ENCODE measurements at regions of chr15 and their contacts with region 1.

Region 1: DNA sequence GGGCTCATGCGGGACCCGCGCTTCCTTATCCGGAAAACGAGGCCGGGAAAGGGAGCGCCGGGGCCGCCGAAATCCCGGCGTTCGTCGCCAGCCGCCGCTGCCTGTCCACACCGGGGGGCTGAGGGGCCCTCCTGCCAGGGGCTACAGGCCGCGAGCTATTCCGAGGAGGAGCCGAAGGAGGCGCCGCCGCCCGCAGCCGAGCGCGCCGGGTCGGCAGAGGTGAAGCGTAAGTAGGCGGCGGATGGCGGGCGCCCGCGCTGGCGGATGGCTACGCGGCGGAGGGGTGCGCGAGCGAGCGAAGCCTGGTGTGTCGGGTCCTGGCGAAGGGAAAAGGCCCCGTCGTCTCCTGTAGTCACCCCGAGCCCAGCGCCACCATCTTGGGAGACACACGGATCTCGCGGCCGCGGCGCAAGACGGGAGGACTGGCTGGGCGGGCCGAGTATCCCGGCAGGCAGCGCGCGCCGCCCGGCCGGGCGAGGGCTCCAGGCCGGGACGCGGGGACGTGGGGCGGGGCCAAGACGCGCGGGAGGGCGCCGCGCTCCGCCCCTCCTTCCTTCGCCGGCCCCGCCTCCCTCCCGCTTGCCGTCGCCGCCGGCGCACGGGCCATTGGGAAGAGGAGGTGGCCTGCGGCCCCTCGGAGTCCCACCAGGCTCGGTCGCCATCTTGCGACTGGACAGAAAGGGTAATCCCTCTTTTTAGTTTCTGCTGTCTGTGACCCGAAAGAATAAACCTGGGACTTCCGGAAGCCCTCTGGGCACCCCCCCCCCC is at the start of gene UBE3A:
- DNase-seq: peak; percentile 89
- H3K4me3 Mint-ChIP-seq: peak within 1 kb of the TSS; percentile 88
- H3K27ac Mint-ChIP-seq: peak within 1 kb of the TSS; percentile 91
- H3K4me1 Mint-ChIP-seq: peaks cover 29% of the 10 kb centered on the region
- H3K27me3 Mint-ChIP-seq: no peaks in the 10 kb centered on the region
- total RNA-seq, gene UBE3A: 85.7 to 92.3 TPM

Region 2: DNA sequence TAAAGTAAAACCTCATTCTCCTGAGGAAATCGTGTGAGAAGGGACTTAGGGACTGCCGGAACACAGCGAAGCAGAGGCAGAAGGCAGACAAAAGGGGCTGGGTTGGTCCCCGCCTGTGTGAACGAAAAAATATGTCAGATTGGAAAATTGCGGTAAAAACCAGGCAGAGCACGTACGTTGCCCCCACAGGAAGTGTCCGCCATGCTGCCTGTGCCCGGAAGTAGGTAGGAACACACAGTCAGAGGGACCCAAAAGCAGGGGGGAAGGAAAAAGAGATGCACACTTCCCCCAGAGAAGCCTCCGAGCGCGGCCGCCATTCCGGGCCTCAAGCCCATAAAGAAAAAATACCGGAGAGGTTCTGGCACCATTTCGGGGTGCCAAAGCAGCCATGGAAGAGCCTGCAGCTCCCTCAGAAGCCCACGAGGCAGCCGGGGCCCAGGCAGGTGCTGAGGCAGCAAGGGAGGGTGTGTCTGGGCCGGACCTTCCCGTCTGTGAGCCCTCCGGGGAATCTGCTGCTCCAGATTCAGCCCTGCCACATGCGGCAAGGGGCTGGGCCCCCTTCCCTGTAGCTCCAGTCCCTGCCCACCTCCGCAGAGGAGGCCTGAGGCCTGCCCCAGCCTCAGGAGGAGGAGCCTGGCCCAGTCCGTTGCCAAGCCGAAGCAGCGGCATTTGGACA is 1873.3 kb before region 1 on chr15 and contains the start of gene MKRN3:
- CTCF ChIA-PET with region 1: no interaction called
- intact Hi-C with region 1: loop called (anchors 5 kb)
- DNase-seq: peak; percentile 67
- H3K4me3 Mint-ChIP-seq: peak within 1 kb of the TSS; percentile 79
- H3K27ac Mint-ChIP-seq: peak within 1 kb of the TSS; percentile 92
- H3K4me1 Mint-ChIP-seq: peaks cover 6% of the 10 kb centered on the region
- H3K27me3 Mint-ChIP-seq: peaks cover 13% of the 10 kb centered on the region
- total RNA-seq, gene MKRN3: 2.5 to 3.2 TPM

Region 3: DNA sequence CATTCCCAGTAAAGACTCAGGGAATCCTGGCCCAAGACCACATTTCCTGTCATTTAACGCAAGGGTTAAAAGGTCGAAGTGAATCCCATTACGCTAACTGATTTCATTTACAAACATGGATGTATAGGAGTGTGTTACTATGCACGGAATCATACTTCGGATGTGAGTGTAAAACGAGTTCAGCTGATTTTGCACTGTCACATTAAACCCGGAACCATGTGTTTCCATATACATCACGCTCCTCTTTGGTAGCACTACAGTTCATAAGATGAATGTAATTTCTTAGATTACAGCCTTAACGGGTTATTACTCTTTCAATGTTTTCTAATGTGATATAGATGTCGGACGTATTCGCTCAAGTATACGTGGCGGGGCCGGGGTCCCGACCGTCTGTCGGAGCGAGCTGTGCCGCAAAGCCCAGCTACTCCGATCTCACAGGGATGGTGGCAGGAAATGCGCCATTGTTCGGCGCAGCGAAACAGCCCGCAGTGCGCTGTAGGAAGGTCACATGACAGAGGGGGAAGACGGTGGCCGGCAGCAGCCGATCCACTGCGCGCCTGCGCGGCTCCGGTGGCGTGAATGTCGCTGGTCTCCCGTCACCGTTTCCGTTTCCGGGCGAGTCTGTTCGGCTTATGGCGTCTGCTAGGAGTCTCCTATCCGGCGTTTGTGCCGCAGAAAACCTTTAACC is 666.0 kb before region 1 on chr15:
- CTCF ChIA-PET with region 1: no interaction called
- intact Hi-C with region 1: loop called (anchors 1 kb)
- DNase-seq: peak; percentile 80
- H3K4me3 Mint-ChIP-seq: peak overlapping the region; percentile 79
- H3K27ac Mint-ChIP-seq: peak overlapping the region; percentile 53
- H3K4me1 Mint-ChIP-seq: peaks cover 2% of the 10 kb centered on the region
- H3K27me3 Mint-ChIP-seq: peaks cover 3% of the 10 kb centered on the region

Region 4: GRCh38 chr15:25368850-25369249 is 69.9 kb before region 1 on chr15:
- CTCF ChIA-PET with region 1: no interaction called
- intact Hi-C with region 1: loop called (anchors 5 kb)
- DNase-seq: no peak
- H3K4me3 Mint-ChIP-seq: no peak overlapping the region
- H3K27ac Mint-ChIP-seq: no peak overlapping the region
- H3K4me1 Mint-ChIP-seq: peaks cover 16% of the 10 kb centered on the region
- H3K27me3 Mint-ChIP-seq: no peaks in the 10 kb centered on the region

Region 5: GRCh38 chr15:25416693-25417092 is 22.1 kb before region 1 on chr15:
- CTCF ChIA-PET with region 1: no interaction called
- intact Hi-C with region 1: loop called (anchors 2 kb)
- DNase-seq: peak; percentile 30
- H3K4me3 Mint-ChIP-seq: no peak overlapping the region
- H3K27ac Mint-ChIP-seq: peak overlapping the region; percentile 68
- H3K4me1 Mint-ChIP-seq: peaks cover 57% of the 10 kb centered on the region
- H3K27me3 Mint-ChIP-seq: no peaks in the 10 kb centered on the region

Region 6: DNA sequence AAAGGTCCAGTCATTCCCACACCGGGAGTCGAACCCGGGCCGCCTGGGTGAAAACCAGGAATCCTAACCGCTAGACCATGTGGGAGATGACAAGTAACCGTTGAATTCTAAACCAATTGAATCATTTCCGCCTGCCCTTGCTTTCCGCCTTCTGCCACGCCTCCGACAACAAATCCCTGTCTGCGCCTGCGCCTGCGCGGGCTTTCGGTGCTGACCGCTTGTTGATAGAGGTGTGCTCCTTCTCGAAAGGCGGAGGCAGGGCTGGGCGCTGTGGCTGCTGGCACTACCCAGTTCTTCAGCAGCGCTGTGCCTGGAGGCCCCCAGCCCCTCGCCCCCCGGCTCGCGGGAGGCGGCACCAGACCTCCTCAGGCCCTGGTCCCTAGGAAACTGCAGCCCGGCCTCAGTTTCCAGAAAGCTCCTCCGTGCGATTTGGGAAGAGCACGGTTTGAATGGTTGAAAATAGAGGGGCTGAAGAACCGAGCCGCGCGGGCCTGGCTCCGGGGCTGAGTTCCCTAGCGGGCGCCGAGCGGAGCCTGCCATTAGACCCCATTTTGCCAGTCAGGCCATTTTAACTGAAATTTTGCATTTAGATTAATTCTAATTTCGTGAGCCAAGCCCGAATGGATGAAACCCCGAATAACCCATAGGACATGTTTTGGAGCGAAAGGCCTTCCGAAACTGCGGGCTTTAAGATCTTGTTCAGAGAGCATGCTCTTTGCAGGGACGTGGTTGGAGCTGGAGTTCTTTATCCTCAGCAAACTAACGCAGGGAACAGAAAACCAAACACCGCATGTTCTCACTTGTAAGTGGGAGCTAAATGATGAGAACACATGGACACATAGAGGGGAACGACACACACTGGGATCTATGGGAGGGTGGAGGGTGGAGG is 643.7 kb after region 1 on chr15:
- CTCF ChIA-PET with region 1: no interaction called
- intact Hi-C with region 1: loop called (anchors 1 kb)
- DNase-seq: peak; percentile 96
- H3K4me3 Mint-ChIP-seq: peak overlapping the region; percentile 83
- H3K27ac Mint-ChIP-seq: peak overlapping the region; percentile 92
- H3K4me1 Mint-ChIP-seq: peaks cover 29% of the 10 kb centered on the region
- H3K27me3 Mint-ChIP-seq: peaks cover 2% of the 10 kb centered on the region